ENCODE measurements at regions of chr5 and their contacts with region 1.

Region 1: DNA sequence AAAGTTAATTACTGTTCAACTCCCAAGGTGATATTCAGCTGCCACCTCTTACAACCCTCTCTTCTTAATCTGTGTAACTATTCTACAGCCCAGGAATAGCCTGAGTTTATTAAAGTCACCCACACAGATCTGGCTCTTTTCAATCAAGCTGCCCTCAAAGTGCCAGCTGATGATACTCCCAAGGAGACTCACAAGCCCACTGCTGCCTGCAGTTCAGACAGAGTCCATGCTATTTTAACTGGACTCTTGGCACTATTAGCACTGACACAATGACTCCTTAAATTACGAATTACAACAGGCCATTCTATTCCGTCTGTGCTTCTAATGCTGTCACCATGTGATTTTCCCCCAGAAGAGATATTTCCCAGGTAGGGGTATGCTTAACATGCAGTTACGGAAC is 26.3 kb downstream of the REEP5 start:
- DNase-seq: no peak

Region 2: GRCh38 chr5:112829651-112830050 is 66.0 kb before region 1 on chr5:
- intact Hi-C with region 1: loop called in 1 of 2 experiments (anchors 2 kb)
- DNase-seq: no peak